ENCODE measurements at regions of chr10 and their contacts with region 1.

Region 1: DNA sequence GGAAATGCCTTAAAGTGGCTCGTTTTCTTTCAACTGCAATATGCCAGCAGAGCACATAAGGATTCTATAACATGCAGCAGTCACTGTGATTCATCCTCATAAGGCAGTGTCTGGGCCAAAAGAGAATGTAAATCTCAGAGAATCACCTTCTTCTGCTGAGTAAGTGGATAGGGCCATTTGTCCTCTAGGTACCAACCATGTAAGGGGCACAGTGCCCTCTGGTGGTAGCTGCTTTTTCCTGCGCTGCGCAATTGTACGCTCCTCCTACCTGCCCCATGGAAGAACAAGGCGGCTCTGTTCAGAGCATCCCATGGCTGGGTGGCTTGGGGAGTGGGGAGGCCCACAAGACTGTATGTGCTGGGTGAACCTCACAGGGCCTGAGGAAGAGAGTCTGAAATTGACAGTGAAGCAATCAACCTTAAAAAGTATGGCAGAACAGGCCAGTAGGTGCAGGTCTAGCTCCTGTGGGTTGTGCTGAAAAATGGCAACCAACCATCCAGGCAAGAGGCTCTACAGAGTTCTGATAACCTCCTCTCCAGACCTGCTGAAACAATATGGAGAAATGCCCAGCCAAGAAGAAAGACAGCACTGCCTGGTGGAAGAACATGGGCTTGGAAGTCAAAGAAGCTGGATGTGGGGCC is 78.6 kb upstream of the C10orf90 start:
- DNase-seq: peak; percentile 28 to 96 (median 85)

Region 2: DNA sequence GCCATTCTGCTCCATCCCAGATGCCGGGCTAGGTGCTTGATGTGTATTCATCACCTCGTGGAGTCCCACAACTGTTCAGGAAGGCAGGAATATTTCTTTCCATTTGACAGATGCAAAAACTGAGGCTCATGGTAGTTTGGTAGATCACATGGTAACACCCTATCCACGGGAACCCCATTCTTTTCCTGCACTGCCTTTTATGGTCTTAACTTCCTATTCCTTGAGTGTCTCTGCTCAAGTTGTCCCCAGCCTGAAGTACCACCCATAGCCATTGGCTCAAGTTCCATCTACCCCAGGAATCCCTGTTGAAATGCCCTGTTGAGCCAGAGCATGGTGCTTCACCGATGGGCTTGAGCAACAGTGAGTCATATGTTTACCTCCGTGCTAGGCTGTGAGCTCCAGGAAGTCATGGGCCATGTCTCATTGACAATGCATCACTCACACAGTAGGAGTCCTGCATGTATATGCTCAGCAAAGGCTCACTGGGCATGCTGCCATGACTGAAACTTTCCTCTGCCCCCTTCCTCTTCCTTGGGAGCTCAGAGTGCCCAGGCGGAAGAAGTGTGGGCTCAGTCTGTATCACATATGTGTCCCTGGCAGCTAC is 289.2 kb before region 1 on chr10:
- intact Hi-C with region 1: loop called (anchors 10 kb)
- DNase-seq: peak in 3 of 42 donors; percentile 15 to 39 (median 34)

Measured in head of caudate nucleus (tissue), 42 donors.